ENCODE measurements at regions of chr21 and their contacts with region 1.

Region 1: GRCh38 chr21:32727687-32728455 is at the start of gene SYNJ1:
- H3K4me3 Mint-ChIP-seq: peak within 1 kb of the TSS; percentile 99
- H3K27ac Mint-ChIP-seq: peak within 1 kb of the TSS; percentile 99
- H3K4me1 Mint-ChIP-seq: peaks cover 41% of the 10 kb centered on the region
- H3K27me3 Mint-ChIP-seq: no peaks in the 10 kb centered on the region

Region 2: DNA sequence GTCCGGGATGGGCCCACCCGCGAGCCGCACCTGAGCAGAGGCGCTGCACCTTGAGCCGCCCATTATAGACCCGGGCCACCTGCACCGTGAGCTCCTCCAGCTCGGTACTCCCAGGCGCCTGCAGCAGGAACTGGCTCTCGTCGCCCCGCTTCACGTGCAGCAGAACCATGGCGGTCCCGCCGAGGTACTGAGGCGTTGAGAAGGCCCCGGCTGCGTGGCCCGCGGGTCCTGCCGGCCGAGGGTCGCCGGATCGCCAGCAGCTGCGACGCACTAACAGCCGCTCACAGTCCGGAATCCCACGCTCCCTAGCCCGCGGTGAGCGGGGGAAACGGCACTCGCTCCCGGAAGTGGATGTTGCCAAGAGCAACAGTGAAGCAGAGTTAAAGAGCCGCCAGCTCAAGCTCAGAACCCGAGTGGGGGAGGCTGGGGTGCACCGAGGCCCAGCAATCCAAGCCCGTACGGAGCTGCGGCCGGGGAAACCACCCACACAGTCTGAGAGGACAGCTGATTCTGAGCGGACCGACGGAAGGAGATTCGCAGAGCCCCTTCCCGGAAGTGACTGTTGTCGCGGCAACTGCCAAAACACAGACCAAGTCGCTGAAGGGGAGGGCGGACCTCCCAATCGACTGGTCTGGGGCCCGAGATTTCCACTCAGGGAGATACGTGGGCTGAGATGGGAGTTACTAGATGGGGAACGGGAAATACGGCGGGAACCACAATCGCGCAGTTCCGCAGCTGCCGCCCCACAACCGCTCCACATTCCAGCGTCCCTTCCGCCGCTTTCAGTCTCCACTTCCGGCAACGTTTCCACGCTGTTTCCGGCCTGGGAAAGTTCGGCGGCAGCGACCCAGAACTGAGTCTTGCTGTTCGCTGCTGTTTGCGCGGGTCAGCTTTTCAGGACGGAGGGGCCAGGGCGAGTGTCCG is 115.5 kb before region 1 on chr21 and contains the start of gene CFAP298:
- intact Hi-C with region 1: loop called (anchors 5 kb)
- H3K4me3 Mint-ChIP-seq: peak within 1 kb of the TSS; percentile 99
- H3K27ac Mint-ChIP-seq: peak within 1 kb of the TSS; percentile 96
- H3K4me1 Mint-ChIP-seq: peaks cover 6% of the 10 kb centered on the region
- H3K27me3 Mint-ChIP-seq: peaks cover 11% of the 10 kb centered on the region

Region 3: GRCh38 chr21:32687643-32688345 is 40.1 kb before region 1 on chr21:
- intact Hi-C with region 1: no loop called
- H3K4me3 Mint-ChIP-seq: no peak overlapping the region
- H3K27ac Mint-ChIP-seq: no peak overlapping the region
- H3K4me1 Mint-ChIP-seq: no peaks in the 10 kb centered on the region
- H3K27me3 Mint-ChIP-seq: no peaks in the 10 kb centered on the region

Region 4: DNA sequence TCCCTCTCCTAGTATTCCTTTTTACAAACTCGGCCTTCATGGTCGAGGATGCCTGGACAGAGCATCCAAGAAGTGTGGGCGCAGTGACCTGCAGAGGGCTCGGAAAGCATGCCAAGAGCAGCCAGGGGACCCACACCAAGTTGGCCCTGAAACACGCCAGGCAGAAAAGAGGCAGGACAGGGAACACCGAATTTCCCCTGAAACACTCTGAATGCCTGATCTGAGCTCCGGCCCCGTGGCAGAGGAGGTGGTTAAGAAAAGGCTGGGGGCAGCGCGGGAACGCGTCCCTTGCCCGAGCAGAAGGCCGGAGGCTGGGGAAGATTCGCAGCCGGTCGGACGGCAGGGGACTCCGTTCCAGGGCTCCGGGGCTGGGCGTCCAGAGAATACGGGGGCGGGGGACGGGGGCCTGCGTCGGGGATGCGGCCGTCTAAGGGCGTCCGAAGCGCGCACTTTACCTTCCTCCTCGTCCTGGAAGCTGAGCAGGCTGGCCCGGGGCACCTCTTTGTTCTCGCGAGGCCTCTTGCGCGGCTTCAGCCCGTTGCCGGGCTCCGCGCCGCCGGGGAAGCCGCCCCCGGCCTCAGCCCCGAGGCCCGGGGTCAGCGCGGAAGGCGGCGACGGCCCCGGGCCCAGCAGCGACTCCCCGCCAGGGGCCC is 43.1 kb after region 1 on chr21:
- intact Hi-C with region 1: loop called (anchors 2 kb)
- H3K4me3 Mint-ChIP-seq: peak overlapping the region; percentile 85
- H3K27ac Mint-ChIP-seq: peak overlapping the region; percentile 91
- H3K4me1 Mint-ChIP-seq: peaks cover 36% of the 10 kb centered on the region
- H3K27me3 Mint-ChIP-seq: no peaks in the 10 kb centered on the region

Measured in dendritic cell treated with granulocyte-macrophage colony-stimulating factor and Interleukin-4, amounts not matched to agents 40 ng/mL and 50 ng/mL, for 4 days (primary cell).